ENCODE measurements at regions of chr9 and their contacts with region 1.

Region 1: GRCh38 chr9:32968101-32969011 is 33.1 kb downstream of the APTX start:
- DNase-seq: peak; percentile 62
- ATAC-seq: no peak
- H3K4me3 Mint-ChIP-seq: no peak overlapping the region
- H3K27ac Mint-ChIP-seq: no peak overlapping the region
- H3K4me1 Mint-ChIP-seq: peaks cover 2% of the 10 kb centered on the region
- H3K27me3 Mint-ChIP-seq: no peaks in the 10 kb centered on the region
- CTCF ChIP-seq: peak; percentile 66

Region 2: DNA sequence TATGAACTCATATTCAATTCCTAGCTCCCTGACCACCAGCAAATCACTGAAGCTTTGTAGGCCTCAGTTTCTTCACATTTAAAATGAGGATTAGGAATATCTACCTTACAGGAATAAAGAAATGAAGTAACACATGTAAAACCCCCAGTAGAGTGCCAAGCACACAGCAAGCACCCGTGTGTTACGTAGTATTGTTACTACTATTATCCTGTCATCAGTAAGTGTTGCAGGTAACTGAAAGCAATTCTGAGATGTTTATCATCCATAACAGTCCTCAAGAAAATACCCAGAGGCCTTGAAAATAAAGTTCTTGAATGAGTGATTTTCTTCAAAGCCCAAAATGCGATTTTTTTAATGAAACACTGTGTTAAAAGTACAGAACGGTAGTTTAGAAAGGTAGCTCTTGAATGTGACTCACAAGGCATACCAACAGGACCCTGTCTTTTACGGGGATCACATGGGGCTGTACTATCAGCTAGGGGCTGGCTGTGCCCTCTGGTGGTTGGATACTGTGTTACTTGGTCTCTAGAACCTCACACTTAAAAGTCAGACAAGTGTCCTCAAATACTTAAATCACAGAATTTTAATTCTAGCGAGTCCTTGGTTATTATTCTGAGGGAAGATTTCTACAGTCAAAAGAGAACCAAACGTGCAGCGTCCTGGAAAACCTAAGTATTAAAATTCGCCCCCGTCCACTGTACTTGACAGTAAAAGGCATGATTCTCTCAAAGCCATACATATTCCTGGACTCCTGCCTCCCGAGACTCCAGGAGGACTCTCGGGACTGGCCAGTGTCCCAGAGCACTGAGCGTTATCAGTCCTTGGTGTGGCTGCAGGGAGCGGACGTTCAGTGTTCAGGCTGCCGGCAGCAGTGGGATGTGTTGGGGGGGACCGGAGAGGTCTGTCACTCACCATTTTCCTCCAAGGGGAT is 396.1 kb before region 1 on chr9:
- CTCF ChIA-PET with region 1: interaction called, 10 read pairs
- POLR2A ChIA-PET with region 1: no interaction called
- DNase-seq: peak; percentile 68
- ATAC-seq: peak; percentile 89
- H3K4me3 Mint-ChIP-seq: peak overlapping the region; percentile 99
- H3K27ac Mint-ChIP-seq: peak overlapping the region; percentile 99
- H3K4me1 Mint-ChIP-seq: peaks cover 11% of the 10 kb centered on the region
- H3K27me3 Mint-ChIP-seq: no peaks in the 10 kb centered on the region
- CTCF ChIP-seq: peak; percentile 18; the same call in 1 of the 2 replicates

Region 3: DNA sequence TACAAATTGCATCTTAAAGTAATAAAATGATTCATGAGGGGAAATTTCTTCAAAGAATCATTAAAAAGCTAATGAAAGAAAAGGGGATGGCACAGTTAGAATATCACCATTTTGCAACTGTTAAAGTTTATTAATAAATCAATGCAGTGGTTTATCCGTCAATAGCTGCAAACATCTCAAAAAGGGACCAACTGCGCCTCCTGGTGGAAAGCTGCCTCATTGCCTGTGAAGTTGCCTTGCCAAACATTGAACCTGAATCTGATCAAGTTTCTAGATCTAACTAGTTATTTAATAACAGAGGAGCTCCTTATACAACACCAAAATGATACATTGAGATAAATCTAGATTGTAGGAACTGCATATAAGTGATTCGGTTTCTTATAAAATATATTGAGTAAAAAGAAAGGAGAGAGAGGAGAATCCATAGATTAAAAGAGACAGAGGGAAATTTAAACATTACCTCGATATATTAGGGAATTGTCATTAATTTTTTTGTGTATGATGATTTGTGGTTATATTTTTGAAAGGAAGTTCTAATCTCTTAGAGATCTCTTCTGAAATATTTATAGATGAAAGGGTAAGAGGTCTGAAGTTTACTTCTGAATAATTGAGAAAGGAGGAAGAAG is 388.5 kb before region 1 on chr9:
- CTCF ChIA-PET with region 1: interaction called, 86 read pairs
- POLR2A ChIA-PET with region 1: no interaction called
- DNase-seq: peak; percentile 76
- ATAC-seq: no peak
- H3K4me3 Mint-ChIP-seq: no peak overlapping the region
- H3K27ac Mint-ChIP-seq: no peak overlapping the region
- H3K4me1 Mint-ChIP-seq: peaks cover 11% of the 10 kb centered on the region
- H3K27me3 Mint-ChIP-seq: no peaks in the 10 kb centered on the region
- CTCF ChIP-seq: peak; percentile 85

Region 4: GRCh38 chr9:32589083-32589723 is 379.2 kb before region 1 on chr9:
- CTCF ChIA-PET with region 1: interaction called, 31 read pairs
- POLR2A ChIA-PET with region 1: no interaction called
- DNase-seq: no peak
- ATAC-seq: peak; percentile 71
- H3K4me3 Mint-ChIP-seq: no peak overlapping the region
- H3K27ac Mint-ChIP-seq: no peak overlapping the region
- H3K4me1 Mint-ChIP-seq: no peaks in the 10 kb centered on the region
- H3K27me3 Mint-ChIP-seq: peaks cover 4% of the 10 kb centered on the region; the same call in 1 of the 2 replicates
- CTCF ChIP-seq: no peak

Region 5: DNA sequence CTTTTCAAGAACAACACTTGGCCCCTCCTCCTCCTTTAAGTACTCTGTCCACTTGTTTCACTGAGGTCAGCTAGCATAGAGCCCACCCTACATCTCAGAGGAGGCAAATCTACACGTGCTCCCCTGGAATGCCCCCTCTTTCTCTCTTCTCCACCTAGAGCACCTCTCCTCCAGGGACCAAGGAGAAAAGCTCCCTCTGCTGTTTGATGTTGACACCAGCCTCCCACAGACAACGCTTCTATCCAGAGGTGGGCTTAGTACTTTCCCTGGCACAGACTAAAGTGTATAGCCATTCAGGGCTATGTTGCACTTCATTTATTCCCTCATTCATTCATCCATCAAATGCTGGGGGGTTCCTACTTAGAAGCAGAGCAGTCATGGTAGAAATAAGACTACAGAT is 264.7 kb before region 1 on chr9:
- CTCF ChIA-PET with region 1: interaction called, 12 read pairs
- POLR2A ChIA-PET with region 1: no interaction called
- DNase-seq: peak; percentile 19
- ATAC-seq: peak; percentile 84
- H3K4me3 Mint-ChIP-seq: no peak overlapping the region
- H3K27ac Mint-ChIP-seq: no peak overlapping the region
- H3K4me1 Mint-ChIP-seq: peaks cover 5% of the 10 kb centered on the region
- H3K27me3 Mint-ChIP-seq: peaks cover 19% of the 10 kb centered on the region
- CTCF ChIP-seq: no peak

Region 6: GRCh38 chr9:32841314-32841713 is 127.0 kb before region 1 on chr9:
- CTCF ChIA-PET with region 1: interaction called, 16 read pairs
- POLR2A ChIA-PET with region 1: no interaction called
- DNase-seq: no peak
- ATAC-seq: peak; percentile 74
- H3K4me3 Mint-ChIP-seq: no peak overlapping the region
- H3K27ac Mint-ChIP-seq: no peak overlapping the region
- H3K4me1 Mint-ChIP-seq: peaks cover 13% of the 10 kb centered on the region
- H3K27me3 Mint-ChIP-seq: no peaks in the 10 kb centered on the region; the same call in 1 of the 2 replicates
- CTCF ChIP-seq: no peak